Endothelial cell of umbilical vein (primary cell): ENCODE measurements at regions of chr7 and their contacts with region 1.

Region 1: GRCh38 chr7:30740424-30741181 is 11.3 kb upstream of the INMT start:
- DNase-seq: peak; percentile 58
- H3K4me3 ChIP-seq: no peak overlapping the region
- H3K27ac ChIP-seq: no peak overlapping the region
- H3K4me1 ChIP-seq: no peaks in the 10 kb centered on the region
- H3K27me3 ChIP-seq: peaks cover 3 to 4% of the 10 kb centered on the region in 2 experiments
- CTCF ChIP-seq: peak; percentile 94 to 98
- POLR2A ChIP-seq: no peak

Region 2: GRCh38 chr7:30276203-30276900 is 464.3 kb before region 1 on chr7:
- CTCF ChIA-PET with region 1: interaction called, 25 read pairs
- POLR2A ChIA-PET with region 1: no interaction called
- dilution Hi-C with region 1: no loop called
- intact Hi-C with region 1: loop called (anchors 5 kb)
- DNase-seq: peak; percentile 69
- H3K4me3 ChIP-seq: no peak overlapping the region
- H3K27ac ChIP-seq: no peak overlapping the region
- H3K4me1 ChIP-seq: no peaks in the 10 kb centered on the region
- H3K27me3 ChIP-seq: peaks cover 0 to 2% of the 10 kb centered on the region in 2 experiments
- CTCF ChIP-seq: peak; percentile 52 to 72
- POLR2A ChIP-seq: no peak

Region 3: DNA sequence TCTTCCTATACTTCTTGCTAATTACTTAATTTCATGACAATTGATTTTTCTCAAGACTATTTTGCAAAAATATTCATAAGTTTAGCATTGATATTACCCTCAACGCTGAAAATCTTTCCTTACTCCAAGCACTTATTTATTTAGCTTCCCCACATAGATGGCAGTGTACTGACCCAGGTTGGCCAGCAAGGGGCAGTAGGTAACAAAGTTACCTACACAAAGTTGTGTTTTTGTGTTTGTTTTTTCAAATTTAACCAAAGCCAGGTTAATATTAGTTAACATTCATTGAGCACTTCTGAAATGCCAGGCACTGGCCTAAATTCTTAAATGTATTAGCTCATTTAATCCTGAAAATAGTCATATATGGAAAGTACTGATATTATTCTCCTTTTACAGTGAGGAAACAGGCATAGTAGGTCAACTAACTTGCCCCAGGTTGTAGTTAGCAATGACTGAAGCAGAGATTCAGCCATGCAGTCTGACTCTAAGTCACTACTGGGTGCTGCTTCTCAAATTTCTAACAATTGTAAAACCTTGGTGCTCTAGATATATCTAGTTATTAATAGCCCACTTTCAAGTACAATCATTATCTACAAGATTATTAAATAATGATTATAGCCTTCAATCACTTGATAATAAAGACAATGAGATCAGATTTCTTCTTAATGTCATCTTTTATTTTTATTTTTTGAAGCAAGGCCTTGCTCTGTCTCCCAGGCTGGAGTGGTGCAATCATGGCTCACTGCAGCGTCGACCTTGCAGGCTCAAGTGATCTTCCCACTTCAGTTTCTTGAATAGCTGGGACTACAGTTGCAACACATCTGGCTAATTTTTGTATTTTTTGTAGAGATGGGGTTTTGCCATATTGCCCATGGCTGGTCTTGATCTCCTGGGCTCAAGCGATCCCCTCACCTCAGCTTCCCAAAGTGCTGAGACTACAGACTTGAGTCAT is 230.2 kb before region 1 on chr7:
- CTCF ChIA-PET with region 1: interaction called, 5 read pairs
- POLR2A ChIA-PET with region 1: no interaction called
- dilution Hi-C with region 1: no loop called
- intact Hi-C with region 1: loop called (anchors 1 kb)
- DNase-seq: peak; percentile 64
- H3K4me3 ChIP-seq: no peak overlapping the region
- H3K27ac ChIP-seq: no peak overlapping the region
- H3K4me1 ChIP-seq: no peaks in the 10 kb centered on the region
- H3K27me3 ChIP-seq: no peaks in the 10 kb centered on the region
- CTCF ChIP-seq: peak; percentile 64 to 65
- POLR2A ChIP-seq: no peak

Region 4: GRCh38 chr7:30682212-30683083 is 58.2 kb before region 1 on chr7 and contains the start of gene CRHR2:
- CTCF ChIA-PET with region 1: interaction called, 3 read pairs
- POLR2A ChIA-PET with region 1: no interaction called
- dilution Hi-C with region 1: no loop called
- intact Hi-C with region 1: loop called (anchors 1 kb)
- DNase-seq: peak; percentile 4
- H3K4me3 ChIP-seq: no peak within 1 kb of the TSS
- H3K27ac ChIP-seq: no peak within 1 kb of the TSS
- H3K4me1 ChIP-seq: no peaks in the 10 kb centered on the region
- H3K27me3 ChIP-seq: peaks cover 59 to 61% of the 10 kb centered on the region in 2 experiments
- CTCF ChIP-seq: peak; percentile 28 to 44
- POLR2A ChIP-seq: no peak
- total RNA-seq, gene CRHR2: not detected in 2 replicates

Region 5: GRCh38 chr7:30906515-30907240 is 166.1 kb after region 1 on chr7:
- CTCF ChIA-PET with region 1: no interaction called
- POLR2A ChIA-PET with region 1: no interaction called
- dilution Hi-C with region 1: no loop called
- intact Hi-C with region 1: no loop called
- DNase-seq: no peak
- H3K4me3 ChIP-seq: no peak overlapping the region
- H3K27ac ChIP-seq: no peak overlapping the region
- H3K4me1 ChIP-seq: no peaks in the 10 kb centered on the region
- H3K27me3 ChIP-seq: no peaks in the 10 kb centered on the region
- CTCF ChIP-seq: no peak
- POLR2A ChIP-seq: no peak

Region 6: GRCh38 chr7:30974605-30975255 is 234.1 kb after region 1 on chr7:
- CTCF ChIA-PET with region 1: no interaction called
- POLR2A ChIA-PET with region 1: no interaction called
- dilution Hi-C with region 1: no loop called
- intact Hi-C with region 1: loop called (anchors 1 kb)
- DNase-seq: peak; percentile 62
- H3K4me3 ChIP-seq: no peak overlapping the region
- H3K27ac ChIP-seq: no peak overlapping the region
- H3K4me1 ChIP-seq: no peaks in the 10 kb centered on the region
- H3K27me3 ChIP-seq: peaks cover 22 to 29% of the 10 kb centered on the region in 2 experiments
- CTCF ChIP-seq: peak; percentile 61 to 81
- POLR2A ChIP-seq: no peak